GM12878 (cell line): ENCODE measurements at regions of chr1 and their contacts with region 1.

Region 1: GRCh38 chr1:24935615-24936484 is 5.8 kb upstream of the RUNX3 start:
- DNase-seq: peak; percentile 74
- ATAC-seq: peak; percentile 56
- H3K4me3 ChIP-seq: peak overlapping the region; percentile 17; the same call in 1 of the 2 replicates
- H3K27ac ChIP-seq: peak overlapping the region; percentile 61
- H3K4me1 ChIP-seq: peaks cover 52% of the 10 kb centered on the region
- H3K27me3 ChIP-seq: no peaks in the 10 kb centered on the region
- CTCF ChIP-seq: no peak
- EP300 ChIP-seq: no peak
- POLR2A ChIP-seq: peak; percentile 44; the same call in 1 of the 2 replicates
- RAD21 ChIP-seq: no peak

Region 2: DNA sequence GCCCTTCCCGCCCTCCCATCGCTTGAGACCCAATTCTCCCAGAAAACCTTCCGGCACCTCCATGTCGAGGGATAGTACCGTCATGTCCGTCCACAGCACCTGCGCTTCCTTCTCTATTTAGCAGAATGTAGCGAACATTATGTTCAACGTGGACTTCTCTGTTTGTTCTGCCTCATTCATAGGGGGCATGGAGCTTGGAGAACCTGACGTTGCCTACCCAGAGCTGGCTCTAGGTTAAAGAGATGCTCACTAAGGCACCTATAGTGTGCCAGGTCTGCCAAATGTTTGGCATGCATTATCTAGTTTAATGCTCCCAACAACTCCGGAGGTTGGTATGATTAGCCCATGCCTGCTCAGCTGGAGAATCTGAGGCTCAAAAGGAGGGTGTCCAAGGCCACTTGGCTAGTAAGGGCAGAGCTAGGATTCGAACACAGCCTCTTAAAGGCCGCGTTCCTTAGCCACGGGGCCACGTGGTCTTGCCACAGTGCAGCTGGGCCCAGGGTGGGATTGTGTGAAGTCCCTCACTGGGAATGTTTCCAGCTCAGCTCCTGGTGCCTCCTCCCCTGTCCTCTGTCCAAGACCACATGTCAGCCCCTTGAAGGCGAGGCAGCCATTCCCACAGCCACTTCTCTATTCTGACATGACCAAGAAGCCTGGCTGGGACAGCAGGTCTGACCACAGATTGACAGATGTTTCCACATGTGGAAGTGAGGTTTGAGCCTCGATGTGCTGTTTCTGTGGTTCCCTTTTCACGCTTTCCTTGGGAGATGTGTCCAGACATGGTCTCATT is 63.6 kb before region 1 on chr1:
- CTCF ChIA-PET with region 1: no interaction called
- POLR2A ChIA-PET with region 1: no interaction called
- RAD21 ChIA-PET with region 1: no interaction called
- SMC1A ChIA-PET with region 1: no interaction called
- in situ Hi-C with region 1: no loop called
- intact Hi-C with region 1: no loop called
- DNase-seq: no peak
- ATAC-seq: no peak
- H3K4me3 ChIP-seq: no peak overlapping the region
- H3K27ac ChIP-seq: no peak overlapping the region
- H3K4me1 ChIP-seq: peaks cover 7% of the 10 kb centered on the region
- H3K27me3 ChIP-seq: peaks cover 2 to 6% of the 10 kb centered on the region in 2 experiments
- CTCF ChIP-seq: no peak
- EP300 ChIP-seq: no peak
- POLR2A ChIP-seq: no peak
- RAD21 ChIP-seq: no peak

Region 3: DNA sequence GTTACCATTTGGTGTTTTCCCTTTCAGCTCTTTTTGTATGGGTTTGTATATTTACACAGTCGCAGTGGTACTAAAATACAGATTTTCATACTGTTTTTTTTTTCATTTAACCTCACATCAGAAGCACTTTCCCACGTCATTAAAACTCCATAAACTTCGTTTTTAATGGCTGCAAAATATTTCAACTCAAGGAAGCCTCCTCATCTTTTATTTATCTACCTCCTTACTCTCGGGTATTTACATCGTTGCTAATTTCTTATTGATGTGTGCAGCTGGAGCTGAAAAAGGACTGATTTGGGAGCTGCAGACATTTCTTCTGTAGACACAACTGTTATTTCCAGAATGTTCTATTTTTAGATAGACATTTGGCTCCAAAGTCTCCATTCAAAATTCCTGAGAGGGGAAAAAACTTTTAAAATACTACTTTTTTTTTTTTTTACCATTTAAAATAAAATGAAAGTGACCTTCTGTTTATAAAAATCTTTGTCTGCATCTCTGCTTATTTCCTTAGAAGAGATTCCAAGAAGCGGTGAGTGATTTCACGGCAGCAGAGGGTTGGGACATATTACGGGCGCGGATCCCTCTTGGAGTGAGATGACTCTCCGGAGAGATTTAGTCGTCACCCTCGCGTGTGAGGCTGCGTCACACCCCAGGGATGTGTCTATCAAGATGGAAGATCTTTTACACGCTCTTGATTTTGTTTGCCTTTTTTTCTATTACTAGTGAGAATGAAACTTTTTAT is 15.9 kb before region 1 on chr1:
- CTCF ChIA-PET with region 1: interaction called, 9 read pairs
- POLR2A ChIA-PET with region 1: interaction called, 12 read pairs
- RAD21 ChIA-PET with region 1: interaction called, 15 read pairs
- SMC1A ChIA-PET with region 1: interaction called, 8 read pairs
- in situ Hi-C with region 1: no loop called
- intact Hi-C with region 1: no loop called
- DNase-seq: no peak
- ATAC-seq: no peak
- H3K4me3 ChIP-seq: no peak overlapping the region
- H3K27ac ChIP-seq: peak overlapping the region; percentile 67; the same call in 1 of the 2 replicates
- H3K4me1 ChIP-seq: peaks cover 83% of the 10 kb centered on the region
- H3K27me3 ChIP-seq: no peaks in the 10 kb centered on the region
- CTCF ChIP-seq: no peak
- EP300 ChIP-seq: no peak
- POLR2A ChIP-seq: no peak
- RAD21 ChIP-seq: no peak

Region 4: GRCh38 chr1:24946861-24947658 is 11.2 kb after region 1 on chr1:
- CTCF ChIA-PET with region 1: interaction called, 314 read pairs
- POLR2A ChIA-PET with region 1: interaction called, 12 read pairs
- RAD21 ChIA-PET with region 1: interaction called, 51 read pairs
- SMC1A ChIA-PET with region 1: interaction called, 391 read pairs
- in situ Hi-C with region 1: no loop called
- intact Hi-C with region 1: no loop called
- DNase-seq: peak; percentile 70
- ATAC-seq: peak; percentile 84
- H3K4me3 ChIP-seq: 0 out of 2 replicates have a peak overlapping the region, but pooled peaks have one; percentile 44
- H3K27ac ChIP-seq: peak overlapping the region; percentile 85
- H3K4me1 ChIP-seq: peaks cover 56% of the 10 kb centered on the region
- H3K27me3 ChIP-seq: no peaks in the 10 kb centered on the region
- CTCF ChIP-seq: no peak
- EP300 ChIP-seq: peak; percentile 22 to 47; a peak in 2 of 4 replicates
- POLR2A ChIP-seq: peak; percentile 61; the same call in 1 of the 2 replicates
- RAD21 ChIP-seq: no peak

Region 5: GRCh38 chr1:25022361-25023189 is 86.7 kb after region 1 on chr1:
- CTCF ChIA-PET with region 1: interaction called, 9 read pairs
- POLR2A ChIA-PET with region 1: interaction called, 15 read pairs
- RAD21 ChIA-PET with region 1: interaction called, 17 read pairs
- SMC1A ChIA-PET with region 1: interaction called, 13 read pairs
- in situ Hi-C with region 1: no loop called
- intact Hi-C with region 1: no loop called
- DNase-seq: peak; percentile 97
- ATAC-seq: peak; percentile 85
- H3K4me3 ChIP-seq: peak overlapping the region; percentile 56
- H3K27ac ChIP-seq: peak overlapping the region; percentile 100
- H3K4me1 ChIP-seq: peaks cover 94% of the 10 kb centered on the region
- H3K27me3 ChIP-seq: no peaks in the 10 kb centered on the region
- CTCF ChIP-seq: no peak
- EP300 ChIP-seq: peak; percentile 96 to 97
- POLR2A ChIP-seq: no peak
- RAD21 ChIP-seq: peak; percentile 34

Region 6: GRCh38 chr1:25031966-25032667 is 96.3 kb after region 1 on chr1:
- CTCF ChIA-PET with region 1: interaction called, 128 read pairs
- POLR2A ChIA-PET with region 1: interaction called, 75 read pairs
- RAD21 ChIA-PET with region 1: interaction called, 150 read pairs
- SMC1A ChIA-PET with region 1: interaction called, 239 read pairs
- in situ Hi-C with region 1: no loop called
- intact Hi-C with region 1: no loop called
- DNase-seq: peak; percentile 94
- ATAC-seq: peak; percentile 44
- H3K4me3 ChIP-seq: peak overlapping the region; percentile 73
- H3K27ac ChIP-seq: peak overlapping the region; percentile 100
- H3K4me1 ChIP-seq: peaks cover 93% of the 10 kb centered on the region
- H3K27me3 ChIP-seq: no peaks in the 10 kb centered on the region
- CTCF ChIP-seq: peak in 1 of 3 experiments; percentile 30; a peak in 1 of 6 replicates
- EP300 ChIP-seq: peak in 1 of 2 experiments; percentile 17; a peak in 1 of 4 replicates
- POLR2A ChIP-seq: peak; percentile 66
- RAD21 ChIP-seq: peak; percentile 33; the same call in 1 of the 2 replicates